Pancreas (tissue), 10 donors: ENCODE measurements at regions of chr7 and their contacts with region 1.

Region 1: DNA sequence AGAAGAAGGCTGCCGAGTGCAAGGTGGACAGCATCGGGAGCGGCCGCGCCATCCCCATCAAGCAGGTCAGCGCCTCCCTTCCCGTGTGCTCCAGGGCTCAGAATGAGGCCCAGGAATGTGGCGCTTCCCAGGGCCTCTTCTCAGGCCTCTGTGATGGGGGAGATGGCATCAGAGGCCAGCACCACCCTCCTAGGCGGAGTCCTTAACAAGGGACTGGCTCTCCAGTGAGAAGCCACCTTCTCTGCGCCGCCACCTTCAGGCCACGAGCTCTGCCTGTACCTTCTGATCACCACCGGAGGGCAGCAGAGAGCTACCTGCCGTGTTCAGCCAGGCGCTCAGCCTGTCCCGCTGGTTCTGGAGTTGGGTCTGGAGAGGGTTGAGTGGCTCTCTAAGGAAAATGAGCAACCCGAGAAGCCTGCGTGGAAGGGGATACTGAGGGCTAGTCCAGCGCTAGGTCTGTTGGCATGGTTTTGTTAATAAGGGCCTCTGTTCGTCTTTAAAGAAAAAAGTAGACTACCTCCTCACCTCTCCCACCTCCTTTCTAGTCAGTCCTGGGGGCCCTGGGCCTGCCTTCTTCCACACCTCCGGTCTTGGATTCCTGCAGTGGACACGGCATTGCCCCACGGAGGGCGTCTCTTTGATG is 37.7 kb downstream of the AGAP3 start:
- DNase-seq: peak; percentile 75 to 93 (median 87)
- ATAC-seq: peak; percentile 88 to 94 (median 90)
- H3K4me3 ChIP-seq: no peak overlapping the region
- H3K27ac ChIP-seq: no peak overlapping the region
- H3K4me1 ChIP-seq: no peaks in the 10 kb centered on the region
- H3K27me3 ChIP-seq: no peaks in the 10 kb centered on the region
- CTCF ChIP-seq: peak; percentile 95 to 99 (median 96)

Region 2: GRCh38 chr7:151172273-151173141 is 48.6 kb after region 1 on chr7:
- intact Hi-C with region 1: loop called in 2 of 3 experiments (anchors 5 kb)
- DNase-seq: peak; percentile 51 to 95 (median 83)
- ATAC-seq: peak; percentile 79 to 96 (median 90)
- H3K4me3 ChIP-seq: no peak overlapping the region
- H3K27ac ChIP-seq: no peak overlapping the region
- H3K4me1 ChIP-seq: no peaks in the 10 kb centered on the region
- H3K27me3 ChIP-seq: peaks cover 0 to 9% (median 3%) of the 10 kb centered on the region in 4 donors
- CTCF ChIP-seq: peak; percentile 100

Region 3: GRCh38 chr7:151304856-151305255 is 180.9 kb after region 1 on chr7:
- intact Hi-C with region 1: loop called in 1 of 3 experiments (anchors 5 kb)
- DNase-seq: no peak
- ATAC-seq: no peak
- H3K4me3 ChIP-seq: no peak overlapping the region
- H3K27ac ChIP-seq: no peak overlapping the region
- H3K4me1 ChIP-seq: peaks cover 0 to 3% (median 0%) of the 10 kb centered on the region in 3 donors
- H3K27me3 ChIP-seq: peaks cover 0 to 3% (median 0%) of the 10 kb centered on the region in 4 donors
- CTCF ChIP-seq: no peak